ENCODE measurements at regions of chr18 and their contacts with region 1.

Region 1: GRCh38 chr18:39761273-39761672 is 2193.8 kb upstream of the PIK3C3 start:
- DNase-seq: no peak
- H3K4me3 ChIP-seq: no peak overlapping the region
- H3K27ac ChIP-seq: no peak overlapping the region
- H3K4me1 ChIP-seq: no peaks in the 10 kb centered on the region
- H3K27me3 ChIP-seq: no peaks in the 10 kb centered on the region
- CTCF ChIP-seq: no peak
- EP300 ChIP-seq: no peak
- POLR2A ChIP-seq: no peak

Region 2: GRCh38 chr18:39660141-39660540 is 101.1 kb before region 1 on chr18:
- intact Hi-C with region 1: no loop called
- DNase-seq: no peak
- H3K4me3 ChIP-seq: no peak overlapping the region
- H3K27ac ChIP-seq: no peak overlapping the region
- H3K4me1 ChIP-seq: no peaks in the 10 kb centered on the region
- H3K27me3 ChIP-seq: no peaks in the 10 kb centered on the region
- CTCF ChIP-seq: no peak
- EP300 ChIP-seq: no peak
- POLR2A ChIP-seq: no peak

Region 3: DNA sequence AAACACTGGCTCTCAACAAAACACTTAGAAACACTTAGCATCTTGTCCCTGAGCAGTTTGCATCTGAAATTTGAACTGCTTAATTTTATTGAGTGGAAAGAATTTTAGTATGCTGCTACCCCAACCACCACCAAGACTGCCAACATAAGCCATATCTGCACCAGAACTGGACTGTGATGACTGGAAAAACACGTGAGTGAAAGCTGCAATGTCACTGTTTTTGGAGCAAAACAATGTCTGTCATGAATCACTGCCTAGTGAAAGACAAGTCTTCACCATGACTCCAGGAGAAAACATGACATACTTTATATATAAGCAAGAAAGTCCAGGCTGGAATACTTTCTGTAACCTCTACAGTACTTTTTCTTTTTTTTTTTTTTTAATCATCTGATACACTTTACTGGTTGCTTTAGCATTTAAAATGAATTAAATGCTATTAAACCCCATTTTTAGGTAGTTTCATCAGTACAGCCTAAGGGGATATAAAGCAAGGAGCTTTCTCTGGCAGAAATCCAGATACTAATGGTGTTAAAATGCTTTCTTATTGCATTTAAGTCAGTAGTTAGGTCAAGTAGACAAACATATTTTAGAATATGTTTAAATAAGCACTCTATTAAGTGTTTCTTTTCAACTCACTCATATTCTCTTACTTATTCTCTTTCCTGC is 64.3 kb after region 1 on chr18:
- intact Hi-C with region 1: loop called in 1 of 4 experiments (anchors 10 kb)
- DNase-seq: no peak
- H3K4me3 ChIP-seq: no peak overlapping the region
- H3K27ac ChIP-seq: no peak overlapping the region
- H3K4me1 ChIP-seq: no peaks in the 10 kb centered on the region
- H3K27me3 ChIP-seq: no peaks in the 10 kb centered on the region
- CTCF ChIP-seq: no peak
- EP300 ChIP-seq: no peak
- POLR2A ChIP-seq: no peak